ENCODE measurements at regions of chr6 and their contacts with region 1.

Region 1: DNA sequence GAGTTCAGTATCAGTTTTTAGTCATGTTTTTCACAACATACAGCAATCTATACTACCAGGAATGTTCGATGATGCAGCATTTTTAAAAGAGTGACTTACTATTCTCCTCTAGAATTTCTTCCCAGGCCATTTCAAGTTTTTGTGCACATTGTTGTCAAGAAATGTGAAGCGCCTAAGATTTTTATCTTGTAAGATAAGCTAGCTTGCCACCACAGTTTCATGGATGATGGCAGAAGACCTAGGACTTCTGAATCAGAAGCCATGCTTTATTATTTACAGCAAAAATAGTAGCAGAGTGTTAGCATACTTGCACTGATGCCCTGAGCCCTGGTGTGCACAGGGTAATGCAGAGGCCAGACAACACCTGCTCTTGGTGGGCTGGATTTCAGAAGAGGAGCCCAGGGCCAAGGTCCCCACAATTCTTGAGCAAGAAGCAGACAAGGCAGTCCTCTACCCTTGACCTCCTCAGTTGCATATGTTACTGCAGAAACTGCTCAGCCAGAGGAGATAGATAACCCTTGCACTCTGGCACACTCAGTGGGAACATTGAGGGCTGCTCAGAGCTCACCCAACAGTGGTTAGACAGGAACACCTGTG is 99.2 kb downstream of the QKI start:
- DNase-seq: no peak
- H3K4me3 Mint-ChIP-seq: no peak overlapping the region
- H3K27ac Mint-ChIP-seq: peak overlapping the region; percentile 76
- H3K4me1 Mint-ChIP-seq: peaks cover 48% of the 10 kb centered on the region
- H3K27me3 Mint-ChIP-seq: no peaks in the 10 kb centered on the region
- CTCF ChIP-seq: no peak

Region 2: GRCh38 chr6:163183806-163184205 is 329.9 kb before region 1 on chr6:
- CTCF ChIA-PET with region 1: no interaction called
- intact Hi-C with region 1: no loop called
- DNase-seq: no peak
- H3K4me3 Mint-ChIP-seq: no peak overlapping the region
- H3K27ac Mint-ChIP-seq: no peak overlapping the region
- H3K4me1 Mint-ChIP-seq: peaks cover 23% of the 10 kb centered on the region
- H3K27me3 Mint-ChIP-seq: no peaks in the 10 kb centered on the region
- CTCF ChIP-seq: no peak

Region 3: DNA sequence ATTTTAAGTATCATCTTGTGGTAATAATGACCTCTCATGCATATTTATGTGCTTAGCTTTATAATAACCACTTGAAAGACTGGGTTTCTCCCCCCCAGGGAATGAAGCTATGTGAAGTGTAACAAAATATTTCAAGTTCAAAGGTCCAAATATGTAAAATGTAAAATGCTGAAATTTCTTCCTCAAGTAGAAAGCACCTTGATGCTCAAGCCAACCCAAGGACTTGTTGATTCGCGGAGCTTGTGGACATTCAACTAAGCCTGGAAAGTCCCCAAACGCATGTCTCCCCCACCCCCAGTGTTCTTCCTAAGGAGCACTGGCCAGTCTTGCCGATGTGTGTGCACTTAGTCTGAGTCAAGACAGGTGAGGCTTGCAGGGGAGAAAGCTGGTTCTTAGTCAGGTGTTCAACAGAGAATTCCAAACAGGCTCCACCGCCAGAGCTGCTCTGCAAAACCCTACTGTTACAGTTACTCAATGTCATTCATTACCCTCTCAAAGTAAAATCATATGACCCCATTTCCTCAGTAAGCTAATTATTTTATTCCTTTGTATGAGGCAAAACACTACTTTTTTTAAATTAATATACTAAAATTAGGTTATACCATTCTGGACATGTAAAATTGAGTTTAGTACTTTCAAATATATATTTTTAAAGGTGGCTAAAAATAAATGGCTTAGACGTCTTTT is 146.0 kb before region 1 on chr6:
- CTCF ChIA-PET with region 1: no interaction called
- intact Hi-C with region 1: no loop called
- DNase-seq: peak; percentile 16
- H3K4me3 Mint-ChIP-seq: no peak overlapping the region
- H3K27ac Mint-ChIP-seq: no peak overlapping the region
- H3K4me1 Mint-ChIP-seq: no peaks in the 10 kb centered on the region
- H3K27me3 Mint-ChIP-seq: peaks cover 16% of the 10 kb centered on the region
- CTCF ChIP-seq: no peak

Region 4: DNA sequence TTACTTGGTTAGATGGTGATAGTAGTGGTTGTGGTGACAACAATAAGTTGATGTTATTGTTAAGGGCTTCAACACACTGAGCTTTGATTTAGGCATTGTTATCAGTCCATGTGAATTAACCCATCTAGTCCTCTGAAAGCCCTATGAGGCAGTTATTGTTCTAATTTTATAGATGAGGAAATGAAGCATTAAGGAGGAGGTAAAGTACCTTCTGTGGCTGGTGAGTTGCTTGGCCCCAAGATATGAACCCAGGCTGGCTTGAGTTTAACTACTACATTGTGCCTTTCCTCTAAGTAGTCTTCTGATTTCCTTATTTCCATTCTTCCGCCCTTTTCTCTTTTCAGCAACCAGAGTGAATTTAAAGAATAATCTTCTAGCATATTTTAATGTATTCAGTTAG is 17.5 kb before region 1 on chr6:
- CTCF ChIA-PET with region 1: no interaction called
- intact Hi-C with region 1: loop called (anchors 2 kb)
- DNase-seq: no peak
- H3K4me3 Mint-ChIP-seq: no peak overlapping the region
- H3K27ac Mint-ChIP-seq: no peak overlapping the region
- H3K4me1 Mint-ChIP-seq: peaks cover 28% of the 10 kb centered on the region
- H3K27me3 Mint-ChIP-seq: no peaks in the 10 kb centered on the region
- CTCF ChIP-seq: no peak

Region 5: GRCh38 chr6:163533443-163533842 is 19.8 kb after region 1 on chr6:
- CTCF ChIA-PET with region 1: interaction called, 3 read pairs
- intact Hi-C with region 1: loop called (anchors 2 kb)
- DNase-seq: no peak
- H3K4me3 Mint-ChIP-seq: no peak overlapping the region
- H3K27ac Mint-ChIP-seq: peak overlapping the region; percentile 66
- H3K4me1 Mint-ChIP-seq: peaks cover 42% of the 10 kb centered on the region
- H3K27me3 Mint-ChIP-seq: no peaks in the 10 kb centered on the region
- CTCF ChIP-seq: no peak

Region 6: GRCh38 chr6:163608204-163608644 is 94.6 kb after region 1 on chr6:
- CTCF ChIA-PET with region 1: no interaction called
- intact Hi-C with region 1: no loop called
- DNase-seq: no peak
- H3K4me3 Mint-ChIP-seq: no peak overlapping the region
- H3K27ac Mint-ChIP-seq: no peak overlapping the region
- H3K4me1 Mint-ChIP-seq: no peaks in the 10 kb centered on the region
- H3K27me3 Mint-ChIP-seq: no peaks in the 10 kb centered on the region
- CTCF ChIP-seq: no peak